Head of caudate nucleus (tissue), 42 donors: ENCODE measurements at regions of chr4 and their contacts with region 1.

Region 1: GRCh38 chr4:123396307-123397143 is at the start of gene SPRY1:
- DNase-seq: peak; percentile 66 to 95 (median 84)

Region 2: DNA sequence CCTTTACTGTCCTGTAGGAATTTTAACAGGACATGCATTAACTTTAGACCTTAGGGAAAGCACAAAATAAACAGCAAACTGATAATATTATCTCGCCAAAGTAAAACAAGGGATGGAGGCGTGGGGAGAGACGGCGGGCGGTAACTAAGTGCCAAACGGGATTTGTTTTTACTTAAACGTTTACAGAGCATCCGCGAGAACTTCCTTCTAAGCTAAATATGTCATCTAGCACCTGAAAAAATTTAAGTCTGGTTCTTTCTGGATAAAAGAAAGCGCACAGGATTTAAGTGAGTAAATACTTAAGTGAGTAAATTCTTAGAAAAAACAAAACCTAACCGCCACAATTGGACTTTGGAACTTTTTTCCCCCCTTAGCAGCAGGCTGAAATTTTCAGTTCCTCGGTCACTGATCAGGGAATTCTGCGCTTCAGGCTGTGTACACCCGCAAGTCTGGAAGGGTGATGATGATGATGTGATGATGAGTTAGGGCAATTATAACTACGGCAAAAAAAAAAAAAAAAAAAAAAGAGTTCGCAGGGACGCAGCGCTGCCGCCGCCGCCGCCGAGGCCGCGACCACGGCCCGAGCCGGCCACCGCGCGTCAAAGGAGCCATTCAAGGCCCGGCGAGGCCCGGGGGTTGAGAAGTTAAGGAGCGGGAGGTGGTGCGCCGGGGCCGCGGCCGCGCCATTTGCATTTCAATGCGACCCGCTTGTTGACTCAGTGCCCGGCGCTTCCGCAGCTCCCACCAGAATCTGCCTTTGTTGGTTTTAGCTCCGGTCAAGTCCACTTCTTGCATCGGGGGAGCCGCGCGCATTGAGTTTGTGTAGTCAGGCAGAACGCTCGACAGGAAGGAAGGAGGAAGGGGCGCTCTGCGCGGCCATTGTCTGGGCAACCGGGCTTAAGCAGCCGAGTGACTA is 108.8 kb after region 1 on chr4:
- intact Hi-C with region 1: loop called (anchors 10 kb)
- DNase-seq: peak; percentile 13 to 80 (median 58)

Region 3: GRCh38 chr4:123649645-123650391 is 253.3 kb after region 1 on chr4:
- intact Hi-C with region 1: loop called (anchors 10 kb)
- DNase-seq: no peak